Calu3 (cell line): ENCODE measurements at regions of chr14 and their contacts with region 1.

Region 1: GRCh38 chr14:64540208-64541157 is at the start of gene HSPA2:
- DNase-seq: peak; percentile 98
- H3K4me3 Mint-ChIP-seq: peak within 1 kb of the TSS; percentile 73
- H3K27ac Mint-ChIP-seq: peak within 1 kb of the TSS; percentile 80
- H3K4me1 Mint-ChIP-seq: peaks cover 9% of the 10 kb centered on the region
- H3K27me3 Mint-ChIP-seq: no peaks in the 10 kb centered on the region
- CTCF ChIP-seq: peak; percentile 45
- total RNA-seq, gene HSPA2: 3.6 and 4.1 TPM in 2 replicates

Region 2: DNA sequence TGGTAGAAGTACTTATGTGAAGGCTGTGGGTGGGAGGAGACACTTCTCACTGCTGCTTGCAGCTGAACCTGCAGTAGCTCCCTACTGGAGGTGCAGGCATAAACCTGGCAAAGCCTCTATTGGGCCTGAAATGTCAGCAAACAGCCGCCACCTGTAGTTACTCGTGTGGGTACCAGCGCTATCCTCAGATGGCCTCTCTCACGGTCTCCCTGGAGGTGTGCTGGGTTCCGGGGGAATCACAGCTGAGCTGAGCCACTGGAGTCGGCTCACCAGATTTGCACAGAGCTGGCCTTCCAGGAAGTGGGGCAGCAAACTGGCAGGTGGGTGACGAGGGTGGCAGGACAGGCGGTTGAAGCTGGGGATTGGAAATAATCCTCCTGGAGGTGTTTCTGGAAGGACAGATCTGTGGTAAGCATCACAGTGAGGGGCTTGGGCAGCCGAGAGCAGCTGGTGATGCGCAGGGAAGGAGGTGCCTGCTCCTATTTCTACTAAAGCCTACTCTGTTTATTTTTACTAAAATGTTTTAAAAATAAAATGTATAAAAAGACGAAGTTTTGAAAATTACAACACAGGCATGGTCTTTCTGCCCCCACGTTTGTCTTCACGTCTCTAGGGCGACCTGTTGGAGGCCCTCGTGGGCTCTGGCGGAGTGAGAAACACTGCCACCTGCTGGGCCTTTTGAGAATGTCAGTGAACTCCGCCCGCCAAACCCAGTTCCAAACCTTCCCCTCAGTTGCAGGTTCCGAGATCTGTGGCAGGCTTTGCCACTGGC is 95.9 kb after region 1 on chr14:
- CTCF ChIA-PET with region 1: interaction called, 4 read pairs
- intact Hi-C with region 1: loop called (anchors 1 kb)
- DNase-seq: peak; percentile 70
- H3K4me3 Mint-ChIP-seq: no peak overlapping the region
- H3K27ac Mint-ChIP-seq: no peak overlapping the region
- H3K4me1 Mint-ChIP-seq: peaks cover 10% of the 10 kb centered on the region
- H3K27me3 Mint-ChIP-seq: no peaks in the 10 kb centered on the region
- CTCF ChIP-seq: peak; percentile 82

Region 3: DNA sequence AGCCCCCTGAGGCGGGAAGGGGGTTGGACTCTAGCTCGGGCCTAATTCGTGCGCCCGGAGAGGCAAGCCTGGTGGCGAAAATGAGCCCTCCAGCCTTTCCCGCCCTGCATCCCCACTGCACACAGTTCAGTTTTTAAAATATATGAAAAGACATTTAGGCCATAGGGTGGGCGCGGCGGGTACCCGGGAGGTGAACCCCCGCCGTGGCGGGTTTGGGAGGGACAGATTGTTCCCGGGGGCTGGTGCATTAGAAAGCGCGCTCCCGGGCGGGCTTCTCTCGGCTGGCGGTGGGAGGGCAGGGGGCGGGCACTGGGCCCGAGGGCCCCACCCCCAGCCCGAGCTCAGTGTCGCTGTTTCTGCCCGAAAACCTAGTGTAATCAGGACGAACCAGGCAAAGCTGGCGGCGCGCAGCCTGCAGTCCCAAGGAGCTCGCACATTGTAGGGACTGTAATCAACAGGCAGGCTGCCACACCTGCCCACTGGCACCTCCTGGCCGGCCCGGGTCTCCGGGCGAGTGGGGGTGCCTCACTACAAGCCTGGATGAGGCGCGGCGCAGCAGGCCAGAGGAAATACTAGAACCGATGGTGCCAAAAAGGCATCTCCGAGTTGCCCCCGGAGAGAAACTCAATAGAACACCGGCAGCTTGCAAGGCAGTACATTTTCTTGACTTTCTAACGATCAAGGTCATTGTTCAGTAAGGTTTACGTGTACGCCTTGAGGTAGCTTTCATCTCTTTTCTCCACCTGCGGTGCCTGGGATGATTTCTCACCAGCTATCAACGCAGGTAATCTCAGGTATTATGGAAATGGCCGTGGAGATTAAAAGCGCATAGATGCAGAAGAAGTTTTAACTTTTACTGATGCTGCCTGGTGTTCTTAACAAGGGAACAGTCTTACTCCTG is 340.0 kb after region 1 on chr14:
- CTCF ChIA-PET with region 1: no interaction called
- intact Hi-C with region 1: loop called (anchors 10 kb)
- DNase-seq: peak; percentile 55
- H3K4me3 Mint-ChIP-seq: peak overlapping the region; percentile 68
- H3K27ac Mint-ChIP-seq: no peak overlapping the region
- H3K4me1 Mint-ChIP-seq: no peaks in the 10 kb centered on the region
- H3K27me3 Mint-ChIP-seq: peaks cover 92% of the 10 kb centered on the region
- CTCF ChIP-seq: no peak